Common myeloid progenitor, CD34-positive (primary cell): ENCODE measurements at regions of chr7 and their contacts with region 1.

Region 1: DNA sequence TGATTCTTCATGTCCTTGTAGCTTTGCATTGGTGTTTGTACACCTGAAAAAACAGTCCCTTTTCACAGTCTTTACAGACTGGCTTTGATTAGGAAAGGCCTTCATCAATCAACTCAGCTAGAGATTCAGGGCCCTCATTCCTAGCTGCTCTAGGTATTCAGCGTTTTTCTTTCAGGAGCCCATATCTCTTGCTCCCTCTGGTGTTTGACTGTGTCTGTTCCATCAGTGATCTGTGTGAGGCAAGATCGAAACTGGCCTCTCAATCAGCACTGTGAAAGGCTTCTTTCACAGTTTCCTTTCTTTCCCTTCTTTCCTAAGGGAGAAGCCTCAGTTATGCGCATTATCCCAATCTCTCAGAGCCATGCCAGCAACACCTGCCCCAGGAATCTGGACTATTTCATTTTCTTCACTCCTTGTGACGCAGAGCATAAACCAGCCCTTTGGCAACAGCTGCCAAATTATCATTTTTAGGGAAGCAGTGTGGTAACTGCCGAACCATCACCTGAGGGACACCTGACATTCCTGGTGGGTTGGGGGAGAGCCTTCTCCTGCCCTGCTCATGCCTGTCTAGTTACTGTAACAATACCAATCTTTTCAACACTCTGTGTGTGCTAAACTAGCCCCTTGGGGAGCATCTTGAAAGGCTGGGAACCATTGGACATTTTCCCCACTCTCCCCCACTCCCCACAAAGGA is 75.7 kb upstream of the CCDC71L start:
- DNase-seq: peak; percentile 80
- H3K4me3 ChIP-seq: peak overlapping the region in 4 of 7 experiments; percentile 37 to 73 (median 48)
- H3K27ac ChIP-seq: no peak overlapping the region
- H3K4me1 ChIP-seq: peaks cover 7 to 14% (median 10%) of the 10 kb centered on the region in 4 experiments
- H3K27me3 ChIP-seq: no peaks in the 10 kb centered on the region

Region 2: DNA sequence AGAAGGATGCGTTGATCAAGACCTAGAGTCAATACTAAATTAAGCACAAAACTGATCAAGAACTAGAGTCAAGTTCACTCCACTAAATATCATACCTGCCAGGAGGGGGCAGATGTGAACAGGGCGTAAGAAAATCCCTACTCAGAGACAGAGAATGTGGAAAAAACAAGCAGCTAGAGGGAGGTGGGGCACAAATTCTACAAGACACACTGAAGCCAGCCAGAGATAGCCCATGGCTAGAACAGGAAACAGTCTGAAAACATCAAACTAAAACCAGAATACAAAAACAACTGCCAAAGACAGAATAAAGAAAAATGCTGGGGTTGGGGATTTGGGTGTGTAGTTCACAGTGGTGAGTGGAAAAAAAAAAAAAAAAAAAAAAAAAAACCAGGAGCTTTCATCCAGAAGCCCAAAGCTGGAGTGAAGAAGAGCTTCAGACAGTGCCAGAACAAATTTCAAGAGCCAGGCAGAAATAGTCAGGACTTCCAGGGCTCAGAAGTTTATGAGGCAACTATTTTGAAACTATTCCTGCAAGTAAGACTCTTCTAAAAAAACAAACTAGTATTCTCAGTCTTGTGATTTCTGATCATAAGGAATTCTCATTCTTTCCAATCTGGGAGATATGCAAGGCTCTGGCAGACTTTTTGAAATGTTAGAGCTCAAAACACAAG is 194.0 kb before region 1 on chr7:
- CTCF ChIA-PET with region 1: interaction called, 50 read pairs
- POLR2A ChIA-PET with region 1: no interaction called
- DNase-seq: peak; percentile 81 to 90 (median 88)
- H3K4me3 ChIP-seq: no peak overlapping the region
- H3K27ac ChIP-seq: no peak overlapping the region
- H3K4me1 ChIP-seq: peaks cover 0 to 8% (median 0%) of the 10 kb centered on the region in 4 experiments
- H3K27me3 ChIP-seq: no peaks in the 10 kb centered on the region

Region 3: GRCh38 chr7:106679153-106679931 is 57.3 kb before region 1 on chr7:
- CTCF ChIA-PET with region 1: interaction called, 14 read pairs
- POLR2A ChIA-PET with region 1: no interaction called
- DNase-seq: peak; percentile 20 to 74 (median 58)
- H3K4me3 ChIP-seq: no peak overlapping the region
- H3K27ac ChIP-seq: peak overlapping the region in 1 of 2 experiments; percentile 36
- H3K4me1 ChIP-seq: peaks cover 0 to 15% (median 3%) of the 10 kb centered on the region in 4 experiments
- H3K27me3 ChIP-seq: no peaks in the 10 kb centered on the region

Region 4: GRCh38 chr7:106717955-106718871 is 18.4 kb before region 1 on chr7:
- CTCF ChIA-PET with region 1: interaction called, 61 read pairs
- POLR2A ChIA-PET with region 1: no interaction called
- DNase-seq: peak; percentile 94 to 99 (median 98)
- H3K4me3 ChIP-seq: peak overlapping the region in 4 of 7 experiments; percentile 10 to 51 (median 48)
- H3K27ac ChIP-seq: peak overlapping the region; percentile 57 to 86
- H3K4me1 ChIP-seq: peaks cover 31 to 62% (median 40%) of the 10 kb centered on the region in 4 experiments
- H3K27me3 ChIP-seq: no peaks in the 10 kb centered on the region

Region 5: GRCh38 chr7:106840342-106840741 is 103.7 kb after region 1 on chr7:
- CTCF ChIA-PET with region 1: no interaction called
- POLR2A ChIA-PET with region 1: no interaction called
- DNase-seq: no peak
- H3K4me3 ChIP-seq: no peak overlapping the region
- H3K27ac ChIP-seq: no peak overlapping the region
- H3K4me1 ChIP-seq: no peaks in the 10 kb centered on the region
- H3K27me3 ChIP-seq: no peaks in the 10 kb centered on the region